ENCODE measurements at regions of chr17 and their contacts with region 1.

Region 1: GRCh38 chr17:39194089-39194984 is 3.1 kb downstream of the CACNB1 start:
- DNase-seq: peak; percentile 73
- ATAC-seq: peak; percentile 51
- H3K4me3 Mint-ChIP-seq: peak overlapping the region; percentile 66
- H3K27ac Mint-ChIP-seq: peak overlapping the region; percentile 57; the same call in 1 of the 2 replicates
- H3K4me1 Mint-ChIP-seq: peaks cover 36% of the 10 kb centered on the region
- H3K27me3 Mint-ChIP-seq: no peaks in the 10 kb centered on the region
- CTCF ChIP-seq: peak; percentile 12; the same call in 1 of the 2 replicates

Region 2: GRCh38 chr17:39225959-39226683 is 31.8 kb after region 1 on chr17:
- CTCF ChIA-PET with region 1: interaction called, 12 read pairs
- POLR2A ChIA-PET with region 1: no interaction called
- DNase-seq: peak; percentile 98
- ATAC-seq: peak; percentile 96
- H3K4me3 Mint-ChIP-seq: peak overlapping the region; percentile 56
- H3K27ac Mint-ChIP-seq: peak overlapping the region; percentile 26; the same call in 1 of the 2 replicates
- H3K4me1 Mint-ChIP-seq: peaks cover 11% of the 10 kb centered on the region
- H3K27me3 Mint-ChIP-seq: peaks cover 45% of the 10 kb centered on the region
- CTCF ChIP-seq: no peak

Region 3: DNA sequence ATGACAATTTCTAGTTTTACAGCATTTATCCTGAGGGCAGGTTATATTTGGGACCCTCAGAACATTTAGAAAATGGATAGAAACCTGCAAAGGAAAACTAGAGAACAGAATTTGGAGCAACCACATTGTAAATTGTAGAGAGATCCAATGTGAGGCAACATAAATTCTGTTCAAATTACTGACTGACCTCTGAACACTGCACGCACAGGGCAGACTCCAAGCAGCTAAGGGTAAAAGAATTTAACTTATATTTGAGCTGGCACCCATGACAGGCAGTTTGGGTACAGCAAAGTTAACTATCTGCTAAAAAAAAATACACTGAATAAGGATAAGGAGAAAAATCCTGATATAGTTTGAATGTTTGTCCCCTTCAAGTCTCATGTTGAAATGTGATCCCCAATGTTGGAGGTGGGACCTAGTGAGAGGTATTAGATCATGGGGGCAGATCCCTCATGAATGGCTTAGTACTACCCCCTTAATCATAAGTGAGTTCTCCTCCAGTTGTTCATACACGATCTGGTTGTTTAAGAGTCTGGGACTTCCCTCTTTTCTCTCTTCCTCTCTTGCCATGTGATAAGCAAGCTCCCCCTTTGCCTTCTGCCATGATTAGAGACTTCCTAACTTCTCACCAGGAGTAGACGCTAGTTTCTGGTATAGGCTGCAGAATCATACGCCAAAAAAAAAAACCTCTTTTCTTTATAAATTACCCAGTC is 131.3 kb after region 1 on chr17:
- CTCF ChIA-PET with region 1: no interaction called
- POLR2A ChIA-PET with region 1: no interaction called
- DNase-seq: no peak
- ATAC-seq: no peak
- H3K4me3 Mint-ChIP-seq: no peak overlapping the region
- H3K27ac Mint-ChIP-seq: no peak overlapping the region
- H3K4me1 Mint-ChIP-seq: no peaks in the 10 kb centered on the region
- H3K27me3 Mint-ChIP-seq: no peaks in the 10 kb centered on the region
- CTCF ChIP-seq: no peak

Region 4: DNA sequence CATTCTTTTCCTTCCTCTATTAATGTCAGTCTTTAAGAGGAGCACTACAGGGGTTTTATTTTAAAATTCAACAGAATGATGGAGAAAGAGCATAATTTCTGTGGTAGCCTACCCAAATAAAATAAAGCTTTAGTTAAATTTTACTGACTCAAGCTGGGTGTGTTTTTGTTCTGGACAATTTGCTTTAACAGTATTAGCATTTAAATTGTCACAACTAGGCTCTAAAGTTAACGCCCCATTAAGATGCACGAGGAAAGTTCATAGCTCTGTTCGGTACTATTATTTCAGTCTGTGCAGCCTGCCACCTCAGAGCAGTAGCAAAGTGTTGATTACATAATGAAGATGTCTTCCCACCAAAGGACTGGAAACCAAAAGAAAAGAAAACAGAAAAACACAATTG is 319.0 kb after region 1 on chr17:
- CTCF ChIA-PET with region 1: no interaction called
- POLR2A ChIA-PET with region 1: no interaction called
- DNase-seq: no peak
- ATAC-seq: no peak
- H3K4me3 Mint-ChIP-seq: no peak overlapping the region
- H3K27ac Mint-ChIP-seq: peak overlapping the region; percentile 5; the same call in 1 of the 2 replicates
- H3K4me1 Mint-ChIP-seq: no peaks in the 10 kb centered on the region
- H3K27me3 Mint-ChIP-seq: no peaks in the 10 kb centered on the region
- CTCF ChIP-seq: no peak